ENCODE measurements at regions of chr17 and their contacts with region 1.

Region 1: DNA sequence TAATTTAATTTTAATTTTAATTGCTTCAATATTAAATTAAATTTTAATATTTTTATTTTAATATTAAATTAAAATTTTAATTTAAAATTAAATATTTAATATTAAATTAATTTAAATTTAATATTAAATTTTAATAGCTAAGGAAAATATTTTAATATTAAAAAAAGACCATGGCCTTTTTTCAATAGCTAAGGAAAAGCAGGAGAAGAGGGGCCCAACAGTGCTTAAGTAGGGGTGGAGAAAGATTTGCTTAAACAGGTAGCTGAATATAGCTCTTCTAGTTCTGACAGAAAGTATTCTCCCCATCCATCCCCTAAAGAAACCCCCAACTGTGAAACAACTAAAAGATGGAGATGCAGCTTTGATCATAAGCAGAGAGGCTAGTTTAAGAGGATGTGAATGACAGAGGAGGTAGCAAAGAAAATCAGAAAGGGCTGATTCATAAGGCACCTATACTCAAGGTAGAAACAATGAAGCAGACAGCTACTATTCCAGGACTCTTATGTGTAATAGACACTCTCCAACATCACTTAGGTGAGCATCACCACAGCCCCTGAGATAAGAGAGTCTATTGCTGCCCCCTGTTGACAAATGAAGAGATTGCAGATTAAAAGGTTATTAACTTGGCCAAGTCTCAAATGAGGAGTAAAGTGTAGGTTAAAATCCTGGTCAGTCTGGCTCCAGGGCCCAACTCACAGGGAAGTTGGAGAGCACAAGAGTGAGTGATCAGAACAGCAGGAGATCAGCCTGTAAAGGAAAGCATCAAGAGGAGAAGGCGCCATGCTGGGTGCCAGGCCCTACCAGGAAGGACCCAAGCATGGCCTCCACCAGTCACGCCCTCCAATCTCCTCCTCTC is 7.8 kb upstream of the RNASEK start:
- DNase-seq: peak in 2 of 5 donors; percentile 69 to 76
- H3K4me3 ChIP-seq: no peak overlapping the region
- H3K4me3 Mint-ChIP-seq: peak overlapping the region in 1 of 7 donors; percentile 18
- H3K27ac ChIP-seq: no peak overlapping the region
- H3K27ac Mint-ChIP-seq: peak overlapping the region in 7 of 8 donors; percentile 7 to 88 (median 67)
- H3K4me1 ChIP-seq: peaks cover 3% of the 10 kb centered on the region
- H3K4me1 Mint-ChIP-seq: peaks cover 25 to 39% (median 36%) of the 10 kb centered on the region in 3 donors
- H3K27me3 ChIP-seq: no peaks in the 10 kb centered on the region
- H3K27me3 Mint-ChIP-seq: peaks cover 0 to 1% of the 10 kb centered on the region in 2 donors

Region 2: DNA sequence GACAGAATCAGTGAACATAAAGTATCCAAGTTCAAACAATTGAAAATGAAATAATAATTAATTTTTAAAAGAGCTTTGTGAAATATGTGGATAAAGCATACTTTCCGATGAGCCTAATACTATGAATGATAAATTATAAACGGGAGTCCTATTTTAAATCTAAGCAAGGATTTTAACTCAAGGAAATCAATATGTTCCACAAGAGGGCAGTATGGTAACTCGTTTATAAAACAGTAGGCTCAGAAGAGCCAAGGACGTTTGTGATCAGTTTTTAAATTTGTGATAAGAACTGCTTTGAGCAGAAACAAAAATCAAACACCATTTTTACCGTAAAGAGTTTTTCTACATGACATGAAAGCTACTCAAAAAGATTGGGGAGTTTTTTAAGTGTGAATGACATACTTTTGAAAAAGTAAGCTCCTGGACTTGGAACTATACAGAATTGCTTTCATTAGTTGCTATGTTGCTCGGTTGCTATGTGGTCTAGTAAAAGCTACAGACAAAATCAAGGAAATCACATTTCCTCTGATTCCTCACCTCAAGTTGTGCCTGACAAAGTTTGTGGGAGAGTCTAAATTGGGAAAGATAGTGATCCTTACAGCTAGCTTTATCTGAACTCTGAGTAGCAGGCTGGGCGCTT is 161.3 kb before region 1 on chr17:
- CTCF ChIA-PET with region 1: interaction called, 10 read pairs
- POLR2A ChIA-PET with region 1: no interaction called
- DNase-seq: peak in 2 of 5 donors; percentile 19 to 22
- H3K4me3 ChIP-seq: no peak overlapping the region
- H3K4me3 Mint-ChIP-seq: no peak overlapping the region
- H3K27ac ChIP-seq: no peak overlapping the region
- H3K27ac Mint-ChIP-seq: no peak overlapping the region
- H3K4me1 ChIP-seq: no peaks in the 10 kb centered on the region
- H3K4me1 Mint-ChIP-seq: peaks cover 0 to 11% (median 3%) of the 10 kb centered on the region in 3 donors
- H3K27me3 ChIP-seq: no peaks in the 10 kb centered on the region
- H3K27me3 Mint-ChIP-seq: peaks cover 30 to 61% of the 10 kb centered on the region in 2 donors

Region 3: DNA sequence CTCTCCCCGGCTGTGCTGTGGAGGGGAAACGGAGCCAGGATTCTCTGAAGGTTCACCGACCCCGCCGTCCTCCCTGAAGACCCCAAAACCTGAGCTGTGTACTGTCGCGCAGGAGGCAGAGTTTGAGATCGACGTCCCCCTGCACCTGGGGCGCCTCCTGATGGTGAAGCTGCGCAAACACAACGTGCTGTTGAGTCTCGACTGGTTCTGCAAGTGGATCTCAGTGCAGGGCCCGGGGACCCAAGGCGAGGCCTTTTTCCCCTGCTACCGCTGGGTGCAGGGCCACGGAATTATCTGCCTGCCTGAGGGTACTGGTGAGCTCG is 110.5 kb before region 1 on chr17:
- CTCF ChIA-PET with region 1: no interaction called
- POLR2A ChIA-PET with region 1: no interaction called
- DNase-seq: no peak
- H3K4me3 ChIP-seq: no peak overlapping the region
- H3K4me3 Mint-ChIP-seq: peak overlapping the region in 1 of 7 donors; percentile 10
- H3K27ac ChIP-seq: no peak overlapping the region
- H3K27ac Mint-ChIP-seq: peak overlapping the region in 1 of 8 donors; percentile 67
- H3K4me1 ChIP-seq: no peaks in the 10 kb centered on the region
- H3K4me1 Mint-ChIP-seq: peaks cover 0 to 3% (median 0%) of the 10 kb centered on the region in 3 donors
- H3K27me3 ChIP-seq: peaks cover 8% of the 10 kb centered on the region
- H3K27me3 Mint-ChIP-seq: peaks cover 52 to 70% of the 10 kb centered on the region in 2 donors

Region 4: GRCh38 chr17:7014995-7015958 is 10.7 kb after region 1 on chr17:
- CTCF ChIA-PET with region 1: interaction called, 23 read pairs
- POLR2A ChIA-PET with region 1: no interaction called
- DNase-seq: peak; percentile 79 to 89 (median 85)
- H3K4me3 ChIP-seq: peak overlapping the region; percentile 91
- H3K4me3 Mint-ChIP-seq: peak overlapping the region; percentile 92 to 98 (median 95)
- H3K27ac ChIP-seq: peak overlapping the region; percentile 100
- H3K27ac Mint-ChIP-seq: peak overlapping the region; percentile 97 to 100 (median 99)
- H3K4me1 ChIP-seq: peaks cover 58% of the 10 kb centered on the region
- H3K4me1 Mint-ChIP-seq: peaks cover 61 to 75% (median 67%) of the 10 kb centered on the region in 3 donors
- H3K27me3 ChIP-seq: no peaks in the 10 kb centered on the region
- H3K27me3 Mint-ChIP-seq: peaks cover 0 to 1% of the 10 kb centered on the region in 2 donors

Region 5: GRCh38 chr17:7156342-7156940 is 151.8 kb after region 1 on chr17:
- CTCF ChIA-PET with region 1: no interaction called
- POLR2A ChIA-PET with region 1: no interaction called
- DNase-seq: no peak
- H3K4me3 ChIP-seq: no peak overlapping the region
- H3K4me3 Mint-ChIP-seq: no peak overlapping the region
- H3K27ac ChIP-seq: no peak overlapping the region
- H3K27ac Mint-ChIP-seq: peak overlapping the region in 2 of 8 donors; percentile 27 to 87
- H3K4me1 ChIP-seq: no peaks in the 10 kb centered on the region
- H3K4me1 Mint-ChIP-seq: no peaks in the 10 kb centered on the region
- H3K27me3 ChIP-seq: no peaks in the 10 kb centered on the region
- H3K27me3 Mint-ChIP-seq: peaks cover 17 to 49% of the 10 kb centered on the region in 2 donors

Measured in CD8-positive, alpha-beta memory T cell (primary cell).